Activated T-helper 1 cell treated with anti-CD3 and anti-CD28 coated beads, Interleukin-12 subunit alpha, Interleukin-12 subunit beta, Interleukin-2, Interleukin-4 antibody, amounts not matched to agents 30 ng/mL and 10 ng/mL and 1 ng/mL, durations not matched to agents 14 hours and 24 hours and 36 hours (primary cell): ENCODE measurements at regions of chr19 and their contacts with region 1.

Region 1: DNA sequence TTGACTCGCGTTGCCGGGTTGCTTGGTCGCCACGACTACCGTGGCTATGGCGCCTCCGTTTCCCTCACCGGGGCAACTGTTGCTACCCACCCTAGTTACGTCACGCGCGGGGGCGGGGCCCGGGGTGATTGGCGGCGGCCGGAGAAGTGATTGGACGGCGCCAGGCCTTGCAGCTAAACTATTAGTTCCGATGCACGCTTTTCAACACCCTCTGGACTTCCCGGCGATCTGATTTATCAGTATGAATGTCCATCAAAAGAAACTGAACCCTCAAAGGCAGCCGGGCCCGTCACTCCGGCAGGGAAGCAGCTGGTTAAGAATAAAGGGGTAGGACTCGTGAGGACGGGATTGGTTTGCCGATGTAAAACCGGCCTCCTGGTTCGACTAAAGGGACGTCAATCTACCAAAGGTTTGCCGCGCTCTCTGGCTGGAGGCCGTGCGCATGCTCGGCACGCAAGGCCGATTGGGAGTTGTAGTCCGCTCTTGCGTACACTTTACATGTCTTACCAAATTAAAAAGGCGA is at the start of gene RFX1:
- DNase-seq: peak; percentile 99
- H3K4me3 Mint-ChIP-seq: peak within 1 kb of the TSS; percentile 87
- H3K27ac Mint-ChIP-seq: peak within 1 kb of the TSS; percentile 99
- H3K4me1 Mint-ChIP-seq: peaks cover 35% of the 10 kb centered on the region
- H3K27me3 Mint-ChIP-seq: peaks cover 2% of the 10 kb centered on the region
- total RNA-seq, gene RFX1: 16.0 and 17.0 TPM in 2 replicates

Region 2: DNA sequence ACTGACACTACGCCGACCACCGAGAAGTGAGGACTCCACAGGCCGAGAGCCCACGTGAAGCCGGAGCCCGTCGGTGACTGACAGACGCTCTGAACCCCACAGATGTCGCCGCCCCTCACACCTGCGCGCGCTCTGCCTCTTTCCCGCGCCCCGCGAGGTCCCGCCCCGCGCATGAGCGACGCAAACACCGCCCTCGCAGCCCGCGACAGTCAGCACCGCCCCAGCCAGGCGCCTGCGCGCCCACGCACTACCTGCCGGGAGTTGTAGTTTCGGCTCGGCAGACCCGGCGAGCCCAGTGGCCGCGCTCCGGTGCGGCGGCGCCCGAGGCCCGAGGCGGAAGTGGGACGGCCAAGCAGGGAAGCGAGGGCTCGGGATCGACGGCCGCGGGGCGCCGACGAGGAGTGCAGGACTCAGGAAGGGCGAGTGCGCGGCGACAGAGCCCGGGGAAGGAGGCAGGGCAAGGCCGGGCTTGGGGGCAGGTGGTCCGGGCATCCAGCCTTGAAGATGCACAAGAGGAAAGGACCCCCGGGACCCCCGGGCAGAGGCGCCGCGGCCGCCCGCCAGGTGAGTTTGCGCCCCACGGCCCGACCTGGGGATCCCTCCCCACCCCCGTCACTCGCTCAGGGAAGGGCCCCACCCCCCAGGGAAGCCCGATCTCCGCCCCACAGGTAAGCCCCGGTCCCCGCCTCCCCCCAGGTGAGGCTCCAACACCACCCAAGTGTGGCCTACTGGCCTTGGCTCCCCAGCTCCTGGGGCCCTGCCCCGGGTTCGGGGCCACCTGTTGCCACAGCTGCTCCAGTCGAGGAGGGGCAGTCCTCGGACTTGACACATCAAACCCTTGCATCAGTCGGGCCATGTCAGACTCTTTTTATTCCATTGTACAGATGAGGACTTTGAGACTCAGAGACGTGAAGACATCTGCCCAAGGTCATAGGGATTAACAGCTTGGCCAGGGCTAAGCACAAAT is 100.1 kb before region 1 on chr19 and contains the starts of genes BRME1 and CC2D1A:
- intact Hi-C with region 1: loop called (anchors 1 kb)
- DNase-seq: peak; percentile 93
- H3K4me3 Mint-ChIP-seq: peak within 1 kb of the TSS; percentile 86
- H3K27ac Mint-ChIP-seq: peak within 1 kb of the TSS; percentile 91
- H3K4me1 Mint-ChIP-seq: peaks cover 11% of the 10 kb centered on the region
- H3K27me3 Mint-ChIP-seq: no peaks in the 10 kb centered on the region
- total RNA-seq, gene BRME1: 16.6 and 20.5 TPM in 2 replicates
- total RNA-seq, gene CC2D1A: 43.9 and 45.6 TPM in 2 replicates

Region 3: GRCh38 chr19:13986348-13986904 is 19.9 kb before region 1 on chr19:
- intact Hi-C with region 1: loop called (anchors 1 kb)
- DNase-seq: peak; percentile 96
- H3K4me3 Mint-ChIP-seq: peak overlapping the region; percentile 56
- H3K27ac Mint-ChIP-seq: peak overlapping the region; percentile 88
- H3K4me1 Mint-ChIP-seq: peaks cover 48% of the 10 kb centered on the region
- H3K27me3 Mint-ChIP-seq: no peaks in the 10 kb centered on the region

Region 4: GRCh38 chr19:14081325-14082093 is 75.2 kb after region 1 on chr19:
- intact Hi-C with region 1: loop called (anchors 1 kb)
- DNase-seq: peak; percentile 99
- H3K4me3 Mint-ChIP-seq: peak overlapping the region; percentile 96
- H3K27ac Mint-ChIP-seq: peak overlapping the region; percentile 97
- H3K4me1 Mint-ChIP-seq: peaks cover 8% of the 10 kb centered on the region
- H3K27me3 Mint-ChIP-seq: no peaks in the 10 kb centered on the region

Region 5: GRCh38 chr19:14517840-14518505 is 511.7 kb after region 1 on chr19 and contains the start of gene DNAJB1:
- intact Hi-C with region 1: loop called (anchors 1 kb)
- DNase-seq: peak; percentile 73
- H3K4me3 Mint-ChIP-seq: peak within 1 kb of the TSS; percentile 91
- H3K27ac Mint-ChIP-seq: peak within 1 kb of the TSS; percentile 94
- H3K4me1 Mint-ChIP-seq: peaks cover 60% of the 10 kb centered on the region
- H3K27me3 Mint-ChIP-seq: peaks cover 2% of the 10 kb centered on the region
- total RNA-seq, gene DNAJB1: 104 and 120 TPM in 2 replicates